ENCODE measurements at regions of chr12 and their contacts with region 1.

Region 1: DNA sequence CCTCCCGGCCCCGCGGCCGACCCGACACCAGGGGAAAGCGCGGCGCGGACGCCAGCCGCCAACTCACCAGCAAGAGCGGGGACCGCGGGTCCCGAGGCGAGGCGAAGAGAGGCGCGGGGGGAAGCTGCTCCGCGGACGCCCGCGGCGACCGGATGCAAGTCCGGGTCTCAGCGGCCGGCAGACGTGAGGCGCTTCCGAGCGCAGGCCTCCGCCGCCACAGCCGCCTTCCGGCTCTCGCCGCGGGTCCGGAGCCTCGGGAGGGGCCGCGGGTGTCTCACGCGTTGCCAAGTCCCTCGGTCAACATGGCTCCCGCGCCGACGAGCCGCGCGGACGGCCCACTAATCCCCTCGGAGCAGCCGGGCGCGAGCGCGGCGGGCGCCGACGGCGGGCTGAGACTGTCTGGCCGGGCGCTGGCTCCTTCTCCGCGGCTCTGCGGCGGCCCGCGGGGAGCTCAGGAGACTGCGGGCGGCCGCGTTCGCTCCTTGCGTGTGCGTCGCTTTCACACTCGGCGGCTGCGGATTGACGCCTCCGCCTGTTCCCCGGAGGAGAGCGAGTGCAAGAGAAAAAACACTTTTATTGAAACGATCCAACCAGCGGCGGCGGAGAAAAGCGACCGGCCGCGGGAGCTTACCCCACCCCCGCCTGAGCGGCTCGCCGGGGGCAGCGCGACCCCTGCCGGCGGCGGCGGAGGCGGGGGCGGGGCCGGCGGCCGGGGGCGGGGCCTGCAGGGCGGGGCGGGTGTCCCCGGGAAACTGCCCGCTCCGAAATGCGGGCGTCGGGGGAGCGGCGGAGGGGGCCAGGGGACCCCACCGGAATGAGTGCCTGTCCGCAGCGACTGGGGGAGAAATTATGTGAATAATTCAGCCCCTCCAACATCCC is at the start of gene CDK17:
- DNase-seq: peak; percentile 87 to 93 (median 90)
- ATAC-seq: peak; percentile 87
- H3K4me3 ChIP-seq: peak within 1 kb of the TSS; percentile 82
- H3K4me3 Mint-ChIP-seq: peak within 1 kb of the TSS; percentile 94 to 98 (median 96)
- H3K27ac ChIP-seq: peak within 1 kb of the TSS; percentile 98
- H3K27ac Mint-ChIP-seq: peak within 1 kb of the TSS; percentile 96 to 99 (median 97)
- H3K4me1 ChIP-seq: peaks cover 19 to 22% of the 10 kb centered on the region in 2 donors
- H3K4me1 Mint-ChIP-seq: peaks cover 32 to 50% (median 44%) of the 10 kb centered on the region in 7 donors
- H3K27me3 ChIP-seq: no peaks in the 10 kb centered on the region
- H3K27me3 Mint-ChIP-seq: no peaks in the 10 kb centered on the region
- total RNA-seq, gene CDK17: 39.7 to 112 (median 67.9) TPM

Region 2: GRCh38 chr12:96194971-96195844 is 204.9 kb before region 1 on chr12:
- CTCF ChIA-PET with region 1: interaction called, 3 read pairs
- POLR2A ChIA-PET with region 1: interaction called, 4 read pairs
- intact Hi-C with region 1: loop called (anchors 1 kb)
- DNase-seq: peak in 8 of 9 donors; percentile 34 to 91 (median 71)
- ATAC-seq: peak; percentile 80
- H3K4me3 ChIP-seq: peak overlapping the region; percentile 84
- H3K4me3 Mint-ChIP-seq: peak overlapping the region; percentile 92 to 100 (median 98)
- H3K27ac ChIP-seq: peak overlapping the region; percentile 86
- H3K27ac Mint-ChIP-seq: peak overlapping the region; percentile 95 to 99 (median 99)
- H3K4me1 ChIP-seq: peaks cover 29 to 33% of the 10 kb centered on the region in 2 donors
- H3K4me1 Mint-ChIP-seq: peaks cover 30 to 54% (median 46%) of the 10 kb centered on the region in 7 donors
- H3K27me3 ChIP-seq: no peaks in the 10 kb centered on the region
- H3K27me3 Mint-ChIP-seq: peaks cover 0 to 3% (median 0%) of the 10 kb centered on the region in 5 donors

Region 3: DNA sequence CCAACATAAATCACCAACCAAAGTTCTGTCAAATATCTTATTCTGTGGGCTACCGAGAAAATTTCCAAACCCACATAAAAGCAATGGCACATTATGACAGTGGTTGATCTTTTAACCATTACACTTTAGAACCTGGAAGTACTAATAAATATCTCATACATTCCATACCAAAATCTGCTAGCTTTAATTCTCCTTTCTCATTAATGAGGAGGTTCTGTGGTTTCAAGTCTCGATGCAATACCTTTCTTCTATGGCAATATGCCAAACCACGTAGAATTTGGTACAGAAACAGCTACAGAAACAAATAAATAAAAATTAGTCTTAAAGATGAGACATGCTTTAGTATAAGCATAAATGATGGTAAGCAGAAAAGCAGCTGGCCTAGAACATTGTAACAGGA is 105.3 kb before region 1 on chr12:
- CTCF ChIA-PET with region 1: interaction called, 10 read pairs
- POLR2A ChIA-PET with region 1: interaction called, 3 read pairs
- intact Hi-C with region 1: loop called (anchors 2 to 5 kb)
- DNase-seq: peak in 3 of 9 donors; percentile 10 to 29 (median 14)
- ATAC-seq: no peak
- H3K4me3 ChIP-seq: no peak overlapping the region
- H3K4me3 Mint-ChIP-seq: peak overlapping the region in 4 of 10 donors; percentile 13 to 69 (median 39)
- H3K27ac ChIP-seq: no peak overlapping the region
- H3K27ac Mint-ChIP-seq: peak overlapping the region in 5 of 9 donors; percentile 39 to 81 (median 64)
- H3K4me1 ChIP-seq: peaks cover 7 to 11% of the 10 kb centered on the region in 2 donors
- H3K4me1 Mint-ChIP-seq: peaks cover 6 to 52% (median 22%) of the 10 kb centered on the region in 7 donors
- H3K27me3 ChIP-seq: no peaks in the 10 kb centered on the region
- H3K27me3 Mint-ChIP-seq: no peaks in the 10 kb centered on the region

Region 4: DNA sequence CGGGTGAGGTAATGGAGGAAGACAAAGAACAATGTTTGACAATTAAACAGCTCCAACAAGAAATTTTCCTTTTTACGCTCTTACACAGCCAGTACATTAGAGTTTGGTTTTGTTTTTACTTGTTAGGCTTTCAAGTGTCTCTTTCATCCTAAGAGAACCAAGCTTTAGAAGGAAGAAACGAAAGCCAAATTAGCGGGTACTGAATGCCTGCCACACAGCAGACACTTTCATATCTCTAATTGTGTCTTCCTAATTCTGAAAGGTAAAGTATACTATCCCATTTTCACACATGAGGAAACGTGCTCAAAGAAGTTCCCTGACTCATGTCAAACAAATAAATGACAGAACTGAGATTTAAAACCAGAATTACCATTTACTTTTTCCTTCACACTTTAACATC is 64.9 kb before region 1 on chr12:
- CTCF ChIA-PET with region 1: interaction called, 14 read pairs
- POLR2A ChIA-PET with region 1: interaction called, 25 read pairs
- intact Hi-C with region 1: no loop called
- DNase-seq: peak in 6 of 9 donors; percentile 23 to 51 (median 34)
- ATAC-seq: peak; percentile 72
- H3K4me3 ChIP-seq: no peak overlapping the region
- H3K4me3 Mint-ChIP-seq: peak overlapping the region in 9 of 10 donors; percentile 27 to 74 (median 54)
- H3K27ac ChIP-seq: peak overlapping the region; percentile 34
- H3K27ac Mint-ChIP-seq: peak overlapping the region; percentile 30 to 87 (median 78)
- H3K4me1 ChIP-seq: peaks cover 7% of the 10 kb centered on the region in 2 donors
- H3K4me1 Mint-ChIP-seq: peaks cover 21 to 69% (median 60%) of the 10 kb centered on the region in 7 donors
- H3K27me3 ChIP-seq: no peaks in the 10 kb centered on the region
- H3K27me3 Mint-ChIP-seq: no peaks in the 10 kb centered on the region

Region 5: DNA sequence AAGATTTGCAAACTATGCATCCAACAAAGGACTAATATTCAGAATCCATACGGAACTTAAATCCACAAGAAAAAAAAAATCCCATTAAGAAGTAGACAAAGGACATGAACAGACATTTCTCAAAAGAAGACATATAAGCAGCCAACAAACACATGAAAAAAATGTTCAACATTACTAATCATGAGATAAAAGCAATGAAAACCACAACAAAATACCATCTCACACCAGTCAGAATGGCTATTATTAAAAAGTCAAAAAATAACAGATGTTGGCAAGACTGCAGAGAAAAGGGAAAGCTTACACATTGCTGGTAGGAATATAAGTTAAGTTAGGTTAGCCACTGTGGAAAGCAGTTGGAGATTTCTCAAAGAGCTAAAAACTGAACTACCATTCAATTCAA is 16.2 kb before region 1 on chr12:
- CTCF ChIA-PET with region 1: interaction called, 3 read pairs
- POLR2A ChIA-PET with region 1: interaction called, 89 read pairs
- intact Hi-C with region 1: loop called in 1 of 2 experiments (anchors 1 kb)
- DNase-seq: no peak
- ATAC-seq: no peak
- H3K4me3 ChIP-seq: no peak overlapping the region
- H3K4me3 Mint-ChIP-seq: peak overlapping the region in 8 of 10 donors; percentile 2 to 60 (median 19)
- H3K27ac ChIP-seq: no peak overlapping the region
- H3K27ac Mint-ChIP-seq: peak overlapping the region in 7 of 9 donors; percentile 15 to 90 (median 67)
- H3K4me1 ChIP-seq: peaks cover 33 to 40% of the 10 kb centered on the region in 2 donors
- H3K4me1 Mint-ChIP-seq: peaks cover 54 to 95% (median 78%) of the 10 kb centered on the region in 7 donors
- H3K27me3 ChIP-seq: no peaks in the 10 kb centered on the region
- H3K27me3 Mint-ChIP-seq: no peaks in the 10 kb centered on the region

Region 6: DNA sequence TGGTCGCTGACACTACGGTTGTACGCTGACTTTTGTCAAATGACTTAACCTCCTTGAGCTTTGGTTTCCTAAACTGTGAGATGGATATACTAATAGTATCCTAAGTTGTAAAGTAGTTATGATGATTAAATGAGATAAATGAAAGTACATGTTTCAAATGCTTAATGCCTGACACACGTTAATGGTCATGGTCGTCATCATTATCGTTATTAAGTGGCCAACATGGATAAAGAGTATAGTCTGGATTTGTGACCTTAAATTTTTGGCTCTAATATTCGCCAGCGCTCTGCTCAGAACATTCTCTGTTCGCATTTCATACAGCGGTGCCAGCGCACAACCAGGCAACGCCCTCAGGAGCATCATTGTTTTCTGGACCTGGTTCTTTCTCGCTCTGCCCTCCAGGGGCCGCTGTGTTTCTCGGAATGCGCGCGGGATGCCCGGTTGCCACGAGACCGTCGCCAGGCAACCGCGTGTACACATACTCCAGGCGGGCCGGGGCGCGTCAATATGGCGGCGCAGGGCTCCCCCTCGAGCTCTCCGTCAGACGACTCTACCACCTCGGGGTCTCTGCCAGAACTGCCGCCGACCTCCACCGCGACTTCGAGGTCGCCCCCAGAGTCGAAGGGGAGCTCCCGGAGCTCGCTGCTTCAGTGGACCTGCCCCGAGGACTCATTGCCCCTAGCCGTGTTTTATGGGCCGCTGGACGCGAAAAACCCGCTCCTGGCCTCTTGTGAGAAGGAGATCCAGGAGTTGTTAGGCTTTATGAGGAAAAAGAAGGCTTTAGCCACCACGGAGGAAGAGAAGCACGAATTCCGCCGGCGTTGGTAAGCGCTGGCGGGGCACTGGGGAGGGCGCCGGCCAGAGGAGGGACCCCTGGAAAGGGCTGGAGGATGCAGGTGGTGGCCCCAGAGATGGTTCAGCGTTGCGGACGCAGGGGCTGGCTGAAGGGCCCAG is 89.2 kb after region 1 on chr12 and contains the start of gene CFAP54:
- CTCF ChIA-PET with region 1: interaction called, 8 read pairs
- POLR2A ChIA-PET with region 1: interaction called, 3 read pairs
- intact Hi-C with region 1: loop called (anchors 1 kb)
- DNase-seq: peak; percentile 91 to 97 (median 94)
- ATAC-seq: peak; percentile 96
- H3K4me3 ChIP-seq: peak within 1 kb of the TSS; percentile 71
- H3K4me3 Mint-ChIP-seq: peak within 1 kb of the TSS; percentile 77 to 93 (median 88)
- H3K27ac ChIP-seq: peak within 1 kb of the TSS; percentile 66
- H3K27ac Mint-ChIP-seq: peak within 1 kb of the TSS; percentile 68 to 96 (median 89)
- H3K4me1 ChIP-seq: peaks cover 7 to 12% of the 10 kb centered on the region in 2 donors
- H3K4me1 Mint-ChIP-seq: peaks cover 14 to 37% (median 22%) of the 10 kb centered on the region in 7 donors
- H3K27me3 ChIP-seq: no peaks in the 10 kb centered on the region
- H3K27me3 Mint-ChIP-seq: peaks cover 0 to 33% (median 0%) of the 10 kb centered on the region in 5 donors
- total RNA-seq, gene CFAP54: 0.22 to 0.93 (median 0.30) TPM